ENCODE measurements at regions of chr12 and their contacts with region 1.

Region 1: DNA sequence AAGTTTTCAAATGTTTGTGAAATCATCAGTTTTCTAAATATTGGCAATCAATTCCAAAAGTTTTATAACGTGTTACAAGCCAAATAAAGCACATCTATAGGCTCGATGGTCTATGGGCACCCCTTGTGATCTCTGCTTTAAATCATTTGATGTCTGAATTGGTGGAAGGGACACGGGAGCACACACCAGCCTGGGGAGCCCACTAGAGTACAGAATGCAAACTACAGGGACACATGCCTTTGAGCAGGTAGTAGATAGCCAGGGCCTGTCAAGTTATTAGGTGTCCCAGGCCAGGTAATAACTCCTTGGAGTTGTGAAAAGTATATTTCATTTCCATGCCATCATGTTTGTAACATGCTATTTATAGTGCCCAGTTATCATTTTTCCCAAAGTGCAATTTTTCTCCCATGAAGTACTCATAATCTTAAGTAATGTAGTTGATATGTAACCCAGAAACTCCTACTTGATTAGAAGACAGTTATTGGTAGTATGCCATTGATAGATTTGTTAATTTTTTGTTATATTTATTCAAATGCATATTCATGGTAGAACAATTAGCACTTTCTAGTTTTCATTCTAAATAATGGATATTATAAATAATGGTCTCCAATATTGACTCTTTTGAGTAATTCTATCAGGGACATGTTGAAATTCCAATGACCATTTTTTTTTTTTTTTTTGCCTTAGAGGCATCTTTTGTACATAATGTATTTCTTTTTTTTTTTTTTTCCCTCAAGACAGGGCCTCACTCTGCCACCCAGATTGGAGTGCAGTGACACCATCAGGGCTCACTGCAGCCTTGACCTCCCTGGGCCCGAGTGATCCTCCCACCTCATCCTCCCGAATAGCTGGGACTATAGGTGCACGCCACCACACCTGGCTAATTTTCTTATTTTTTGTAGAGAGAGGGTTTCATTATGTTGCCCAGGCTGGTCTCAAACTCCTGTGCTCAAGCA is 96.9 kb upstream of the FGD4 start:
- DNase-seq: peak; percentile 63
- ATAC-seq: peak; percentile 100
- H3K4me3 ChIP-seq: no peak overlapping the region
- H3K27ac ChIP-seq: peak overlapping the region; percentile 69
- H3K4me1 ChIP-seq: peaks cover 9% of the 10 kb centered on the region
- H3K27me3 ChIP-seq: no peaks in the 10 kb centered on the region
- CTCF ChIP-seq: peak; percentile 90 to 91 (median 91)
- EP300 ChIP-seq: no peak
- POLR2A ChIP-seq: no peak
- RAD21 ChIP-seq: peak; percentile 97

Region 2: DNA sequence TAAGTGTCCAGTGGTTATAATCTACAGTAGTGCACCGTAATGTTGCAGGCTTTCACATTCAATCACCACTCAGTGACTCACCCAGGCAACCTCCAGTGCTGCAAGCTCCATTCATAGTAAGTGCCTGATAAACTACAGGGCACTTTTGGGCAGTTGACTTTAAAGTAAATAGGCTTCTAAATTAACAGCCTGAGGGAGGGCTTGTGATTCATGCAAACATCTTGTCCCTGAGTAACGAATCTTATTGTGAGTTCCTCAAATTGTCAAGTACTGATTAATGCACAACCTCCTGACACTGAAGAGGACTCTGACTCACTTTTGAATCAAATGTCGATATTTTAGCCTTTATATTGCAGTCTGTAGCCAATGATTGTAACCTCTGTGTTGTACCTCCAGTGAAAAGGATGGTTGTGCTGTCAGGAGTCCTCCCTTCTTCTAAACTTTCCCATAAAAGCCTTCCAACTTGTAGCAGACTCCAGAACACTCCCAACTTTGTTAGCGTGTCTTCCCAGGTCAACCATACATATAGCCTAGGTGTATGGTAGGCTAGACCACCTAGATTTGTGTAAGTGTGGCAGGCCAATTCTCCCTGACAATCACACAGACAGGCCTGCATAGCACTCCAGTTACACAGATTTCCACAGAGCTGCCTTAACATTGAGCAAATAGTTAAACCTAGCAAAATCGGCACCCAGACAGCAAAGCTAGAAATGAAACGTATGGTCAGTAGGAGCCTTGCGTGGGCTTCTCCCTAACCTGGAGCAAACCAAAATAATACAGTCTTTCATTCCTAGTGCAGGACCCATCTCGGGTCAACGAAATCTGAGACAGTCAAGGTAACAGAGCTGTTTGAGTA is 250.7 kb before region 1 on chr12:
- CTCF ChIA-PET with region 1: no interaction called
- POLR2A ChIA-PET with region 1: no interaction called
- RAD21 ChIA-PET with region 1: no interaction called
- SMC1A ChIA-PET with region 1: no interaction called
- in situ Hi-C with region 1: loop called (anchors 5 kb)
- intact Hi-C with region 1: no loop called
- DNase-seq: no peak
- ATAC-seq: peak; percentile 54; the same call in 2 of the 3 replicates
- H3K4me3 ChIP-seq: no peak overlapping the region
- H3K27ac ChIP-seq: no peak overlapping the region
- H3K4me1 ChIP-seq: no peaks in the 10 kb centered on the region
- H3K27me3 ChIP-seq: no peaks in the 10 kb centered on the region
- CTCF ChIP-seq: no peak
- EP300 ChIP-seq: no peak
- POLR2A ChIP-seq: no peak
- RAD21 ChIP-seq: no peak

Region 3: GRCh38 chr12:32062881-32063280 is 239.6 kb before region 1 on chr12:
- CTCF ChIA-PET with region 1: interaction called, 14 read pairs
- POLR2A ChIA-PET with region 1: no interaction called
- RAD21 ChIA-PET with region 1: interaction called, 7 read pairs
- SMC1A ChIA-PET with region 1: interaction called, 52 read pairs
- in situ Hi-C with region 1: loop called (anchors 5 kb)
- intact Hi-C with region 1: loop called (anchors 2 kb)
- DNase-seq: no peak
- ATAC-seq: peak; percentile 45
- H3K4me3 ChIP-seq: no peak overlapping the region
- H3K27ac ChIP-seq: no peak overlapping the region
- H3K4me1 ChIP-seq: peaks cover 2% of the 10 kb centered on the region; the same call in 1 of the 2 replicates
- H3K27me3 ChIP-seq: no peaks in the 10 kb centered on the region
- CTCF ChIP-seq: 0 out of 6 replicates have a peak, but pooled peaks of 1 of the 3 experiments have one; percentile 3
- EP300 ChIP-seq: no peak
- POLR2A ChIP-seq: no peak
- RAD21 ChIP-seq: no peak